ENCODE measurements at regions of chr15 and their contacts with region 1.

Region 1: GRCh38 chr15:73972984-73973682 is 19.0 kb downstream of the STOML1 start:
- DNase-seq: peak; percentile 95
- H3K4me3 Mint-ChIP-seq: peak overlapping the region; percentile 51
- H3K27ac Mint-ChIP-seq: peak overlapping the region; percentile 25
- H3K4me1 Mint-ChIP-seq: peaks cover 37% of the 10 kb centered on the region
- H3K27me3 Mint-ChIP-seq: peaks cover 5% of the 10 kb centered on the region

Region 2: DNA sequence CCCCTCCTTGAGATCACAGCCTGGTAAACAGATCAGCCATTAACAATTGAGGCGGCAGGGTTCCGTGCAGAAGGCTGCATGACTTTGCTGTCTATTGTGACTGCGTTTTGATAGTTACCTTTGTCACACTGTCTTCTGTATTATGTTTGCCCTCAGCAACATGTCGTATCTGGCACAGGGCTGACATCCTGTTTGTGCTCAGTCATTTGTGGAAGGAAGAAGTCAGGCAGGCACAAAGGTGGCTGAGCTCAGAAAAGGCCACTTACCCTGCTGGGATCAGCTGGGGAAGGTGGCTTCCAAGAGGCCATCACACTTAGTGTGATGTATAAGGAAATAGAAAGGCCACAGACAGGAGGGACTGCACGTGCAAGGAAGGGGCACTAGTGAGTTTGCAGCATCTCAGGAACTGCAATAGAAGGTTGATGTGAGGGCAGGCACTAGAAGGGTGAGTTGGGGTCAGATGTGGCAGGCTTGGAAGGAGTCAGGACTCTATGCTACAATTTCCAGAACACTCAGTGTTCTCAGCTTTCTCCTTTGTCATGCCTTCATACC is 34.8 kb after region 1 on chr15:
- intact Hi-C with region 1: loop called (anchors 5 kb)
- DNase-seq: peak; percentile 81
- H3K4me3 Mint-ChIP-seq: peak overlapping the region; percentile 74
- H3K27ac Mint-ChIP-seq: peak overlapping the region; percentile 97
- H3K4me1 Mint-ChIP-seq: peaks cover 50% of the 10 kb centered on the region
- H3K27me3 Mint-ChIP-seq: no peaks in the 10 kb centered on the region

Region 3: DNA sequence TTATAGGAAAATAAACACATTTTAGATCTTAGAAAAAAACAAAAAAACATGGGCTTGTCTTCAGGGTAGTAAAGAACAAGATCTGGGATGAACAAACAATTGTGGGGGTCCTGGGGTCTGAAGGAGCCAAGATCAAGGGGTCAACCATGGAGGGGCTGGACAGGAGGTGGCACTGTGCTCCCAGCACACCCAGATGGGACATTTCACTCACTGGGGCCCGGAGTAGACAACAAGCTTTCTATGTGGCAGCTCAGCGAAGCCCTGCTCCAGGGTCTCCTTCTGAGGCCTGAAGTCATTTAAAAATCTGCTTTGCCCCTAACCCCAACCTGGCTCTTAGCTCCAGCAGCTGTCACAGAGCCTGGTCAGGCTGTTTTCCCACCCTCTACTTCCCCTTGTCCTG is 74.6 kb after region 1 on chr15:
- intact Hi-C with region 1: loop called (anchors 1 kb)
- DNase-seq: no peak
- H3K4me3 Mint-ChIP-seq: no peak overlapping the region
- H3K27ac Mint-ChIP-seq: no peak overlapping the region
- H3K4me1 Mint-ChIP-seq: peaks cover 5% of the 10 kb centered on the region
- H3K27me3 Mint-ChIP-seq: no peaks in the 10 kb centered on the region

Region 4: DNA sequence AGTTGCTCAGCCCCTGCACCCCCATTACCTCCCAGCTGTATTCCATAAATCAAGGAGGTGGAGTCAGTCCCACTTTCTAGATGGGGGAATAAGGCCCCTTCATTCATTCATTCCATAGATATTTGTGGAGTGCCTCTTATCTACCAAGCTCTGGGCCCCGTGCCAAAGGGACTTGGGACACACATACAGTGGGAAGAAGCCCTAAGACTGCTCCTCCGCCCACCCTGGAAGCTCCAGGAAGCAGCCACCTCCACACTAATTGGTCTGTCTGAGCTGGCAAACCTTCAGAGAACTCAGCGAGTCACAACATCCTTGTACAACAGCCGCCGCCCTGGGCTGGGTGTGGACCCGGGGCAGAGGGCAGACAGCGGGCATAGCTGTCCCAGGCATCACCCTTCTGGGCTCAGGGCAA is 223.1 kb after region 1 on chr15:
- intact Hi-C with region 1: no loop called
- DNase-seq: no peak
- H3K4me3 Mint-ChIP-seq: no peak overlapping the region
- H3K27ac Mint-ChIP-seq: no peak overlapping the region
- H3K4me1 Mint-ChIP-seq: peaks cover 2% of the 10 kb centered on the region
- H3K27me3 Mint-ChIP-seq: no peaks in the 10 kb centered on the region

Region 5: GRCh38 chr15:74302821-74303359 is 329.8 kb after region 1 on chr15:
- intact Hi-C with region 1: loop called (anchors 5 kb)
- DNase-seq: peak; percentile 78
- H3K4me3 Mint-ChIP-seq: no peak overlapping the region
- H3K27ac Mint-ChIP-seq: no peak overlapping the region
- H3K4me1 Mint-ChIP-seq: no peaks in the 10 kb centered on the region
- H3K27me3 Mint-ChIP-seq: peaks cover 37% of the 10 kb centered on the region

Region 6: DNA sequence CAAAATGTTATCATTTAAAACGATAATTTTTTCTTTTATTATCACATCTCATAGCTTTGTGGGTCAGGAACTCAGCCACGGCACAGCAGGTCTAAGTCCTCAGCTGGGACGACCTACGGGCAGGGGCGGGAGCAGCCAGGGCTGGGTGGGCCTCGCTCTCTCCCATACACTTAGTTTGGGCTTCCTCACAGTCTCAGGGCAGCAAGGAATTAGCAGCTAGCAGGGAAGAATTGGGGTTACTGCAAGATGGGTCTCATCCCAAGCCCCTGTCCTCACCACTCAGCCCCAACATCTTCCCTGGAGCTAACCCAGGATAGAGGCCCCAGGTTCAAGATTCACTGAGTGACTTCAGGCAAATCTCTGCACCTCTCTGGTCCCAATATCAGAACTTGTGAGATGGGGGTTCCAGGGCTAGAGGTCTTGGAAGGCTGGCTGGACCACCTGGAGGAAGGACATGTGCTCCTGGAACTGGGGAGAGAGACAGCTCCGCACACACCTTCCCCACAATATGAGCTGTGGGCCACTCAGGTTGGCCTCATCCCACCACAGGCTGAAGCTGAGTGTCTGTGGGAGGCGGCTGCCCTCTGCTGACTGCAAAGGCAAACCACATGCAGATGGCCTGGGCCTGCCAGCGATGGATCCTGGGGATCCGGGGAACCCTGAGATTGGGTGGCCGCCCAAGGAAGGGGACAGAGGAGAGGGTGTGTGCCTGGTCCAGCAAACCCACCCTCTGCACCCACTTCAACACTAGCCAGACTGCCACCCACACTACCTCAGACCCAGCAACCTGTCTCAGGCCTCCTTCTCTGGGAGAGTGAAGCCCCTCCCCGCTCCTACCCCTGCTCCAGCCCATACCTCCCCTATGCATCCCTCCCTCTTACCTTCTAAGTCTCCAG is 349.3 kb after region 1 on chr15:
- intact Hi-C with region 1: loop called (anchors 1 kb)
- DNase-seq: peak; percentile 85
- H3K4me3 Mint-ChIP-seq: no peak overlapping the region
- H3K27ac Mint-ChIP-seq: no peak overlapping the region
- H3K4me1 Mint-ChIP-seq: no peaks in the 10 kb centered on the region
- H3K27me3 Mint-ChIP-seq: peaks cover 9% of the 10 kb centered on the region

Region 7: DNA sequence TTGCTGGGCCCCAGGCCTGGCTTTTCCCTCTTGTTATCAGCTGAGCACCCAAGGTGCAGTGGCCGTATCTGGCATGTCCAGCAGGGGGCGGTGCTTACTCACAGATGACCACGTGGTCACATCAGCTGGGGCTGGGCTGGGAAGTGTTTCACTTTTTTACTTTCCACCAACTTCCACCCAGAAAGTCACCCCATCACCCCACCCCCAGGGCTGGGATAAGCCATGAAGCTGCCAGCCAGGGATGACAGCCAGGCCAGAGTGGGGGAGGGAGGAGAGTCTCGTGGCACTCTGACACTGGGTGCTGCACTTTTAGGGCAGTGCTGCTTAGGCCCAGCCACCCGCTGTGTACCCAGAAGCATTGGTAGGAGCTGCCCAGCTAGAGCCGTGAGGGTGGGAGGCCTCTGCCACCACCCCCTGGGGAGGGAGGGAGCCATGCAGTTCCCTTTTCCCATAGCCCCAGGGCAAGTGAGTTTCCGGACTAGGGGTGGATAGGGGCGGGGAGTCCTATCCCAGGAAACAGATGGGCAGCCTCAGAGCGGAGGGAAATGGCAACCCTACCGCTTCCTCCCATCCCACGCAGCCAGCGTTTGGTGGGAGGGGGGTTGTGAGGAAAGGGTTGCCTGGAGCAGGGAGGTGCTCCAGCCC is 1056.4 kb after region 1 on chr15:
- intact Hi-C with region 1: no loop called
- DNase-seq: peak; percentile 97
- H3K4me3 Mint-ChIP-seq: peak overlapping the region; percentile 26
- H3K27ac Mint-ChIP-seq: peak overlapping the region; percentile 76
- H3K4me1 Mint-ChIP-seq: peaks cover 44% of the 10 kb centered on the region
- H3K27me3 Mint-ChIP-seq: no peaks in the 10 kb centered on the region

Measured in activated CD4-positive, alpha-beta T cell treated with anti-CD3 and anti-CD28 coated beads, Interleukin-2, amount 10 ng/mL, durations not matched to agents 24 days and 14 days (primary cell).